AG04450 (cell line): ENCODE measurements at regions of chr2 and their contacts with region 1.

Region 1: GRCh38 chr2:43941966-43942365 is 53.8 kb downstream of the LRPPRC start:
- DNase-seq: no peak
- H3K4me3 ChIP-seq: no peak overlapping the region
- H3K27ac ChIP-seq: no peak overlapping the region
- H3K27me3 ChIP-seq: no peaks in the 10 kb centered on the region
- CTCF ChIP-seq: no peak

Region 2: DNA sequence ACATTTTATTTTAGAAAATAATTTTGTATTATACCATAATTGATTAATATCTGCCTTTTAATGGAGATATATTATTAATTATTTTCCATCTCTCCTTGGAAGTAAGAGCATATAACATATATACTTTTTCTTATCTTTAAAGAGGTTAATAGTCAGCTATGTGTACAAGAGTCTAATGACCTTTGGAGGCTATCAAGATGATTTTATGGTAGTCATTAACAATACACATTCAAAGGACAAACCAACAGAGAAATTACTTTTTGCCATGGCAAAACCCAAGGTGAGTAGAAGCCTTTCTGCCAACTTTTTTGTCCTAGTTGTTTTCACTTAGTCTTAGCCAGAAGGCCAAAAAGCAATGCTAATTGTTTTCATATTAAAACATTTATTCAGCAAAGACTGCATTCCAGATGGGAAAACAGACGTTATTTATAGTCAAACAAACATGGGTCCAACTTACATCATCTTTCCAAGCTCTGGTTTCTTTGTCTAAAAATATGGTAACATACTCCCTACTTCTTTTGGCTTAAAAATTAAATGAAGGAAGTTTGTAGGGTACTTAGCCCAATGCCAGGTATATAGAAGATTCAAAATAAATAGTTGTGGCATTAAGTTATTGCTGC is 177.8 kb before region 1 on chr2:
- CTCF ChIA-PET with region 1: no interaction called
- POLR2A ChIA-PET with region 1: interaction called, 10 read pairs
- DNase-seq: no peak
- H3K4me3 ChIP-seq: no peak overlapping the region
- H3K27ac ChIP-seq: no peak overlapping the region
- H3K27me3 ChIP-seq: no peaks in the 10 kb centered on the region
- CTCF ChIP-seq: no peak

Region 3: GRCh38 chr2:43877782-43878464 is 64.0 kb before region 1 on chr2:
- CTCF ChIA-PET with region 1: interaction called, 10 read pairs
- POLR2A ChIA-PET with region 1: no interaction called
- DNase-seq: peak; percentile 16
- H3K4me3 ChIP-seq: no peak overlapping the region
- H3K27ac ChIP-seq: no peak overlapping the region
- H3K27me3 ChIP-seq: peaks cover 12% of the 10 kb centered on the region
- CTCF ChIP-seq: peak; percentile 98